SK-N-SH (cell line): ENCODE measurements at regions of chr12 and their contacts with region 1.

Region 1: DNA sequence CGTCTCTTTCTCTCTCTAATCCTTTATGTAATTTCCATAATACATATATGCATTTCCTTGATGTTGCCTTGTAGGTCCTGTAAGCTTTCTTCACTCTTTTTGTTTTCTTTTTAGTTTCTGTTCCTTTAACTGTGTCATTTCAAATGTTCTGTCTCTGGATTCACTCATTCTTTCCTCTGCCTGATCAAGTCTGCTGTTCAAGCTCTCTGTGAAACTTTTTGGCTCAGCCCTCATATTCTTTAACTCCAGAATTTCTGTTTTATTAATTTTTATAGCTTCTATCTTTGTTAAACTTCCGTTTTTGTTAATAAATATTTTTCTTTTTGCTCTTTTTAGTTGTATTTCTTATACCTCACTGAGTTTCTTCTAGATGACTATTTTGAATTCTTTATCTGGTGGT is 321.3 kb upstream of the LMO3 start:
- DNase-seq: no peak
- H3K4me3 ChIP-seq: no peak overlapping the region
- H3K27ac ChIP-seq: no peak overlapping the region
- H3K4me1 ChIP-seq: no peaks in the 10 kb centered on the region
- H3K27me3 ChIP-seq: no peaks in the 10 kb centered on the region
- CTCF ChIP-seq: no peak
- EP300 ChIP-seq: no peak
- RAD21 ChIP-seq: no peak

Region 2: GRCh38 chr12:16606201-16606849 is 320.9 kb before region 1 on chr12:
- CTCF ChIA-PET with region 1: no interaction called
- POLR2A ChIA-PET with region 1: no interaction called
- DNase-seq: peak; percentile 29
- H3K4me3 ChIP-seq: peak overlapping the region; percentile 43 to 57
- H3K27ac ChIP-seq: no peak overlapping the region
- H3K4me1 ChIP-seq: peaks cover 0 to 32% of the 10 kb centered on the region in 2 experiments; a peak in 3 of 4 replicates
- H3K27me3 ChIP-seq: no peaks in the 10 kb centered on the region; the same call in 1 of the 2 replicates
- CTCF ChIP-seq: no peak
- EP300 ChIP-seq: no peak
- RAD21 ChIP-seq: no peak

Region 3: GRCh38 chr12:16939871-16940306 is 12.6 kb after region 1 on chr12:
- CTCF ChIA-PET with region 1: interaction called, 11 read pairs
- POLR2A ChIA-PET with region 1: no interaction called
- DNase-seq: peak; percentile 36
- H3K4me3 ChIP-seq: peak overlapping the region in 1 of 2 experiments; percentile 41; a peak in 1 of 4 replicates
- H3K27ac ChIP-seq: no peak overlapping the region
- H3K4me1 ChIP-seq: no peaks in the 10 kb centered on the region
- H3K27me3 ChIP-seq: no peaks in the 10 kb centered on the region
- CTCF ChIP-seq: peak; percentile 55
- EP300 ChIP-seq: no peak
- RAD21 ChIP-seq: peak; percentile 69